A673 (cell line): ENCODE measurements at regions of chr3 and their contacts with region 1.

Region 1: DNA sequence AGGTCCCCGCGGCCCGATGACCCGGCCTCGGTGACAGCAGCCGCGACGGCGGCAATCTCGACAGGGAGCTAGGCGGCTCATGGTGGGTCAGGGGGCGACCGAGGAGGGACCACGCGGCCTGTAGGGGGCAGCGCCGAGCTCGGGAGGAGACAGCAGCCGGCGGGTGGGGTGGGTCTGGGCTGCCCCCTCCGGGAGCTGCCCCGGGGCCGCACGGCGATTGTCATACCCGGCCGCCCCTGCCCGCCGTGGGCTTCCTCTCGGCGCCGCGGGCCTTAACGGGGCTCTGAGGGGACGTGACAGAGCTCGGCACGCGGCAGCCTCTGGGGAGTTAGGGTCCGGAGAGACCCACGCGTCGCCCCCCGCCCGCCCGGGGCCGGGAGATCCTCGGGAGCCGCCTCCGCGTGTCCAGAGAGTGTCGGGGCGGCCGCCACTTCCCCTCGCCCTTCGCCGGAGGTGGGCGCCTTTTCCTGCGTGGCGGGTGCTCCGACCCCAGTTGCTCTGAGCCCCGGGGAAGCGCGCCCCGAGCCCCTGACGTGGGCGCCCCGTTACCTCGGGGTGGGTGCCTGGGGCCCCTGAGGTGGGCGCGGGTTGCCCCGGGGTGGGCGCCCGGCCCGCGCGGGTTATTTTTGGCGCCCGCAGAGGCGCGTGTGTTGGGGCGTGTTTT is 539 bp upstream of the PLCL2 start:
- DNase-seq: peak; percentile 53
- H3K4me3 ChIP-seq: peak overlapping the region; percentile 53
- H3K27ac ChIP-seq: no peak overlapping the region
- H3K4me1 ChIP-seq: no peaks in the 10 kb centered on the region
- H3K27me3 ChIP-seq: peaks cover 34% of the 10 kb centered on the region
- CTCF ChIP-seq: peak; percentile 63

Region 2: GRCh38 chr3:16309558-16309957 is 574.7 kb before region 1 on chr3:
- CTCF ChIA-PET with region 1: no interaction called
- POLR2A ChIA-PET with region 1: no interaction called
- intact Hi-C with region 1: no loop called
- DNase-seq: peak; percentile 41
- H3K4me3 ChIP-seq: no peak overlapping the region
- H3K27ac ChIP-seq: no peak overlapping the region
- H3K4me1 ChIP-seq: no peaks in the 10 kb centered on the region
- H3K27me3 ChIP-seq: no peaks in the 10 kb centered on the region
- CTCF ChIP-seq: no peak

Region 3: GRCh38 chr3:17233398-17233800 is 349.2 kb after region 1 on chr3:
- CTCF ChIA-PET with region 1: no interaction called
- POLR2A ChIA-PET with region 1: no interaction called
- intact Hi-C with region 1: loop called (anchors 10 kb)
- DNase-seq: peak; percentile 66
- H3K4me3 ChIP-seq: no peak overlapping the region
- H3K27ac ChIP-seq: no peak overlapping the region
- H3K4me1 ChIP-seq: no peaks in the 10 kb centered on the region
- H3K27me3 ChIP-seq: no peaks in the 10 kb centered on the region
- CTCF ChIP-seq: peak; percentile 75

Region 4: DNA sequence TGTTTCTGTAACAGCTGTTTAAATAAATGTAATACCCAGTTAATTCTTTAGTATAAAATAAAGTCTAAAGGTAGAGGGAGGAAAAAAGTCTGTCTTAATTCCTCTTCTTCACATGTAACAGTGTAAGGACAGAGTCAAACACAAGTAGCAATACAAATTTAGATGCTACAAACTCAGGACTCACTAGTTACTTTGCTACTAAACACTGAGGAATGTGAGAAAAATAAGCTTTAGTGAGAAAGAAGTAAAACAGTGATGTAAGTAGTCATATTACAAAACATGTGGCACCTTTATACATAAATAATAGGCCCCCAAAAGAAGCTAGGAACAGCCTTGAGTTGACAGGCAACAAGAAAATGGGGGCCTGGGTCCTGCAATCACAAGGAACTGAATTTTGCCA is 745.2 kb after region 1 on chr3:
- CTCF ChIA-PET with region 1: interaction called, 12 read pairs
- POLR2A ChIA-PET with region 1: no interaction called
- intact Hi-C with region 1: no loop called
- DNase-seq: no peak
- H3K4me3 ChIP-seq: no peak overlapping the region
- H3K27ac ChIP-seq: no peak overlapping the region
- H3K4me1 ChIP-seq: peaks cover 4% of the 10 kb centered on the region
- H3K27me3 ChIP-seq: no peaks in the 10 kb centered on the region
- CTCF ChIP-seq: no peak